ENCODE measurements at regions of chr1 and their contacts with region 1.

Region 1: DNA sequence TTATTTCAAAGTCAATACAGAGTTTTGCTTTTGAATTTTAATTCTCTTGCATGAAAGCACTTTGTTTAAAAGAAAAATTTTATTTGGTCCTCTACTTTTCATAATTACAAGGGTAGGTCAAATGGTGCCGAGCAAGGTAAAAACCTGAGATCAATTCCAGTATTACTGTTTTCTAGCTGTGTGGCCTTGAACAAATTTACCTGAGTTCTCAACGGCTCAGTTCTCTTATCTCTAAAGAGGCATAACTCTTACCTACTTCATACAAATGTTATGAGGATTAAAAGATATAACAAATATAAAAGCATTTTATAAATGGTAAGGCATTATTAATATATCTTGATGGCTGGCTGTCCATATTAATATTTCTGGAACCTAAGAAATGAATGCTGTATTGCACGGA is 42.5 kb downstream of the USP24 start:
- DNase-seq: no peak
- H3K4me3 ChIP-seq: no peak overlapping the region
- H3K27ac ChIP-seq: no peak overlapping the region
- H3K4me1 ChIP-seq: no peaks in the 10 kb centered on the region
- CTCF ChIP-seq: no peak

Region 2: GRCh38 chr1:55140546-55140983 is 32.1 kb before region 1 on chr1:
- CTCF ChIA-PET with region 1: no interaction called
- POLR2A ChIA-PET with region 1: no interaction called
- intact Hi-C with region 1: no loop called
- DNase-seq: peak; percentile 76
- H3K4me3 ChIP-seq: no peak overlapping the region
- H3K27ac ChIP-seq: no peak overlapping the region
- H3K4me1 ChIP-seq: no peaks in the 10 kb centered on the region
- CTCF ChIP-seq: peak; percentile 96

Region 3: DNA sequence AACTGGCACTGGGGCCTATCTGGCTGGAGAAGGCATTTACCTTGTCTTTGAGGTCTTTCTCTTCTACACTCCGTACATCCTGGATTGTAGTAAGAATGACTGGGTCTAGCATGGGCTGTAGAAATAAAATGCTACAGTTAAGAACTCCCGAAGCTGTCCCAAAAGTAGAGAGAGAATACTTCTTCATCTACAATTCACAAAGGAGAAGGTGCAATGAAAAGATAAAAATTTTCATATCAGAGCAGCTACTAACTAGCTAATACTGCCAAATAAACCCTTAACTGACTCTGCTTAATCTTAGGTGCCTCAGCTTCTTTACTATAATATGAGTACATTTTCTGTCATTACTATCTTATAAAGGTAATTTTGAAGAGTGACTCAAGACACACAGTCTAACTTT is 13.1 kb before region 1 on chr1:
- CTCF ChIA-PET with region 1: no interaction called
- POLR2A ChIA-PET with region 1: no interaction called
- intact Hi-C with region 1: no loop called
- DNase-seq: no peak
- H3K4me3 ChIP-seq: no peak overlapping the region
- H3K27ac ChIP-seq: no peak overlapping the region
- H3K4me1 ChIP-seq: no peaks in the 10 kb centered on the region
- CTCF ChIP-seq: no peak

Region 4: GRCh38 chr1:55209247-55209646 is 36.6 kb after region 1 on chr1:
- CTCF ChIA-PET with region 1: no interaction called
- POLR2A ChIA-PET with region 1: interaction called, 16 read pairs
- intact Hi-C with region 1: no loop called
- DNase-seq: peak; percentile 48
- H3K4me3 ChIP-seq: no peak overlapping the region
- H3K27ac ChIP-seq: no peak overlapping the region
- H3K4me1 ChIP-seq: peaks cover 43% of the 10 kb centered on the region
- CTCF ChIP-seq: 0 out of 2 replicates have a peak, but pooled peaks have one; percentile 13